Dorsolateral prefrontal cortex (tissue), 120 donors: ENCODE measurements at regions of chr20 and their contacts with region 1.

Region 1: GRCh38 chr20:32678948-32679347 is 5.2 kb upstream of the C20orf203 start:
- DNase-seq: peak; percentile 66 to 90 (median 83)
- H3K4me3 ChIP-seq: no peak overlapping the region
- H3K27ac ChIP-seq: peak overlapping the region in 42 of 59 donors; percentile 0 to 82 (median 50)
- H3K27me3 ChIP-seq: no peaks in the 10 kb centered on the region
- CTCF ChIP-seq: peak in 3 of 56 donors; percentile 10 to 12 (median 12)

Region 2: GRCh38 chr20:32429343-32429742 is 249.6 kb before region 1 on chr20:
- intact Hi-C with region 1: no loop called
- DNase-seq: no peak
- H3K4me3 ChIP-seq: no peak overlapping the region
- H3K27ac ChIP-seq: no peak overlapping the region
- H3K27me3 ChIP-seq: no peaks in the 10 kb centered on the region
- CTCF ChIP-seq: no peak

Region 3: DNA sequence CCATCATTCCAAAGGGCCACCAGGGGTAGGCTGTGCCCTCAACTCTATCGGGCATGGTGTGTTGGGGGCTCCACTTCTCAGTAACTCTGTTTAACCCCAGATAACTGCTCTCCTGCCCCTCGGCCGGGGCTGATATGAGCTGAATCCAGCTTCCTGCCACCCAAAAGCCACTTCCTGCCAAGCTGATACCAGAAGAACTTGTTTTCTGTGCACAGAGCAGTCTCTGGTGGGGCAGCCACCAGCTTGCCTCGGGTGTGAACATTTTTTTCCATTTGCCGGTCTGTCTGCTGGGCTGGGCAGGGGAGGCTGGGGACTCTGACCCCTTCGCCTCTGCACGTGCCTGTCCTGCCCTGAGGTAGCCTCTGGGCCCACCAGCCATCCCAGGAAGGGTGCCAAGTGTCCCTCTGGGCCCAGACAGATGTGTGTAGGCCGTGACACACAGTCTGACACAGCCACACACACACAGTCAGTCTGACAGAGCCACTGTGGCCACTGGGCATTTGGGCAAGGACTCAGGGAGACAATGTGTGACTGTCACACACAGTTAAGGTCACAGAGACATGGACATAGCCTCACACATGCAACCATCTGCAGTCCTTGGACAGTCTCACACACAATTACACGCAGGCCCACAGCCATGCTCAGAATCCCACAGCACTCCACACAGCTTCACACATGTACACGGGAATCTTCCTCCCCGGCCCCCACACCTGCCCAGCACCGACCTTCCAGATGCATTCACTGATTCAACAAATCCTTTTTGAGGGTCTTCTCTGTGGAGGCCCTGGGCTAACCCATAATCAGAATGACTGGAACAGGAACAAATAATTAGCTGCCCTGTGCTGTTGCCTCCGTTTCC is 138.9 kb before region 1 on chr20:
- intact Hi-C with region 1: no loop called
- DNase-seq: no peak
- H3K4me3 ChIP-seq: no peak overlapping the region
- H3K27ac ChIP-seq: peak overlapping the region in 54 of 59 donors; percentile 13 to 98 (median 78)
- H3K27me3 ChIP-seq: no peaks in the 10 kb centered on the region
- CTCF ChIP-seq: no peak

Region 4: GRCh38 chr20:32779500-32780211 is 100.7 kb after region 1 on chr20:
- intact Hi-C with region 1: loop called in 1 of 2 experiments (anchors 5 kb)
- DNase-seq: no peak
- H3K4me3 ChIP-seq: no peak overlapping the region
- H3K27ac ChIP-seq: no peak overlapping the region
- H3K27me3 ChIP-seq: no peaks in the 10 kb centered on the region
- CTCF ChIP-seq: no peak